Mammary epithelial cell (primary cell): ENCODE measurements at regions of chr12 and their contacts with region 1.

Region 1: GRCh38 chr12:7060353-7060954 is at the start of gene C1S:
- DNase-seq: peak; percentile 89
- H3K4me3 ChIP-seq: no peak within 1 kb of the TSS
- H3K27ac ChIP-seq: no peak within 1 kb of the TSS
- H3K4me1 ChIP-seq: peaks cover 11% of the 10 kb centered on the region
- H3K27me3 ChIP-seq: no peaks in the 10 kb centered on the region
- CTCF ChIP-seq: peak; percentile 78 to 94
- total RNA-seq, gene C1S: 3.5 to 13.8 TPM

Region 2: GRCh38 chr12:7005311-7005710 is 55.1 kb before region 1 on chr12:
- CTCF ChIA-PET with region 1: no interaction called
- dilution Hi-C with region 1: loop called (anchors 5 kb)
- in situ Hi-C with region 1: no loop called
- intact Hi-C with region 1: no loop called
- DNase-seq: no peak
- H3K4me3 ChIP-seq: no peak overlapping the region
- H3K27ac ChIP-seq: no peak overlapping the region
- H3K4me1 ChIP-seq: no peaks in the 10 kb centered on the region
- H3K27me3 ChIP-seq: no peaks in the 10 kb centered on the region
- CTCF ChIP-seq: no peak

Region 3: GRCh38 chr12:7092229-7092985 is 32.0 kb after region 1 on chr12 and contains the start of gene C1R:
- CTCF ChIA-PET with region 1: no interaction called
- dilution Hi-C with region 1: no loop called
- in situ Hi-C with region 1: no loop called
- intact Hi-C with region 1: loop called (anchors 1 kb)
- DNase-seq: peak; percentile 48
- H3K4me3 ChIP-seq: peak within 1 kb of the TSS; percentile 27 to 46 (median 45)
- H3K27ac ChIP-seq: no peak within 1 kb of the TSS
- H3K4me1 ChIP-seq: peaks cover 9% of the 10 kb centered on the region
- H3K27me3 ChIP-seq: no peaks in the 10 kb centered on the region
- CTCF ChIP-seq: peak; percentile 84 to 87
- total RNA-seq, gene C1R: 6.1 to 16.3 TPM

Region 4: DNA sequence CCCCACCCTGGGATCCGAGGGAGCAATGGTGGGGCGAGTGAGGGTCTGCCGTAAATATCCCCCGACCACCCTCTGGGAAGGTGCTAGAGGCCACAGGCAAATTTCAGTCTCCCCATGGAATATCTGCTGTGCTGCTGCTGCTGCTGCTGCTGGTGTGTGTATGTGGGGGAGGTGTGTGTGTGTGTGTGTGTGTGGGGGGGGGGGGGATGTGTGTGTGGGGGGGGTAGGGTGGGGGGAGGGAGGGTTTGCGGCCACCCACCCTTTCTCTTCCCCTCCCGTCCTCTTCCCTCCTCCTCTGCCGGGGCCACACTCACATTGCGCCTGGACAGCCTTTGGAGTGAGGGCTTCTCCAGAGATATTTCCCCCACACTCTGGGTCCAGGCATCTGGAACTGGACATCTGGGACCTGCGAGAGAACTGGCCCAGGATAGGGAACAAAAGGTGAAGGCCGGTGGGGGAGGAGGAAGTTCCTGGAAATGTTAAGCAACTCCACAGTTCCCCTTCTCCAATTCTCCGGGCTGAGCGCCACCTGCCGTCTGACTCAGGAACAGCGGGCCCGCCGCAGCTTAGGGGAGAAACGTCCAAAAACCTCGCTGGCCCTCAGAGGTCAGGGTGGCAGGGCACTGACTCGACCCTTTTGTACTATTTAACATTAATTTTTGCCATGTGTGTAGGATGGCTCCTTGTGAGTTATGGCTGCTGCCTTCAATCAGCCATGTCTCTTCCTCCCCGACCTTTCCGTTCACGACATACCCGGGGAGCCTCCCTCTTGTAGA is 48.5 kb after region 1 on chr12 and contains the start of gene C1RL:
- CTCF ChIA-PET with region 1: interaction called, 3 read pairs
- dilution Hi-C with region 1: loop called (anchors 5 kb)
- in situ Hi-C with region 1: loop called in 1 of 2 experiments (anchors 5 kb)
- intact Hi-C with region 1: loop called (anchors 1 kb)
- DNase-seq: peak; percentile 75
- H3K4me3 ChIP-seq: peak within 1 kb of the TSS; percentile 75 to 80 (median 76)
- H3K27ac ChIP-seq: peak within 1 kb of the TSS; percentile 81
- H3K4me1 ChIP-seq: peaks cover 23% of the 10 kb centered on the region
- H3K27me3 ChIP-seq: no peaks in the 10 kb centered on the region
- CTCF ChIP-seq: peak; percentile 96 to 99
- total RNA-seq, gene C1RL: 32.1 to 38.3 TPM

Region 5: DNA sequence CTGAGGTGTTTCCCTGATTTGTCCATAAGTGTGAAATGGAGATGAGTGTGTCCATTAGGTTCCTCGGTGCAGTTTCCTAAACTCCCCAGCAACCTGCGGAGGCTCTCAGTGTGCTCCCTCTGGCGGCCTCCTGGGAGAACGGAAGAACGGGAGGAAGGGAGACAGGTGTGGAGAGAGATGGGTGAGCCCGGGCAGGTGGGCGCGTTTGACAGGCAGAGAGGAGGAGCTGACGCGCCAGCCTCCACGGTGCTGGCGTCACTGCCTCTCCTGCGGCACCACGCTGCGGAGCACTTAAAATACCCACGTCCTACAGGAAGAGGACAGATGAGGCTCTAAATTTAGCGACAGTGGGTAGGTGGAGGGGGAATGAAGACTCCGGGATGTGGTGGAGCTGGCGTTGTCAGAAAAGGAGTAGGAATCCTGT is 102.2 kb after region 1 on chr12:
- CTCF ChIA-PET with region 1: no interaction called
- dilution Hi-C with region 1: loop called (anchors 5 kb)
- in situ Hi-C with region 1: no loop called
- intact Hi-C with region 1: no loop called
- DNase-seq: peak; percentile 58
- H3K4me3 ChIP-seq: no peak overlapping the region
- H3K27ac ChIP-seq: no peak overlapping the region
- H3K4me1 ChIP-seq: peaks cover 2% of the 10 kb centered on the region
- H3K27me3 ChIP-seq: no peaks in the 10 kb centered on the region
- CTCF ChIP-seq: peak; percentile 80 to 92

Region 6: GRCh38 chr12:7460375-7461259 is 400.2 kb after region 1 on chr12:
- CTCF ChIA-PET with region 1: no interaction called
- dilution Hi-C with region 1: no loop called
- in situ Hi-C with region 1: no loop called
- intact Hi-C with region 1: loop called (anchors 5 kb)
- DNase-seq: peak; percentile 33
- H3K4me3 ChIP-seq: no peak overlapping the region
- H3K27ac ChIP-seq: no peak overlapping the region
- H3K4me1 ChIP-seq: no peaks in the 10 kb centered on the region
- H3K27me3 ChIP-seq: no peaks in the 10 kb centered on the region
- CTCF ChIP-seq: peak; percentile 72 to 87